ENCODE measurements at regions of chr1 and their contacts with region 1.

Region 1: GRCh38 chr1:208820580-208821212 is 576.5 kb upstream of the PLXNA2 start:
- DNase-seq: no peak
- ATAC-seq: no peak
- H3K4me3 ChIP-seq: no peak overlapping the region
- H3K4me3 Mint-ChIP-seq: no peak overlapping the region
- H3K27ac ChIP-seq: no peak overlapping the region
- H3K27ac Mint-ChIP-seq: no peak overlapping the region
- H3K4me1 ChIP-seq: no peaks in the 10 kb centered on the region
- H3K4me1 Mint-ChIP-seq: no peaks in the 10 kb centered on the region
- H3K27me3 ChIP-seq: no peaks in the 10 kb centered on the region
- H3K27me3 Mint-ChIP-seq: no peaks in the 10 kb centered on the region
- CTCF ChIP-seq: no peak

Region 2: DNA sequence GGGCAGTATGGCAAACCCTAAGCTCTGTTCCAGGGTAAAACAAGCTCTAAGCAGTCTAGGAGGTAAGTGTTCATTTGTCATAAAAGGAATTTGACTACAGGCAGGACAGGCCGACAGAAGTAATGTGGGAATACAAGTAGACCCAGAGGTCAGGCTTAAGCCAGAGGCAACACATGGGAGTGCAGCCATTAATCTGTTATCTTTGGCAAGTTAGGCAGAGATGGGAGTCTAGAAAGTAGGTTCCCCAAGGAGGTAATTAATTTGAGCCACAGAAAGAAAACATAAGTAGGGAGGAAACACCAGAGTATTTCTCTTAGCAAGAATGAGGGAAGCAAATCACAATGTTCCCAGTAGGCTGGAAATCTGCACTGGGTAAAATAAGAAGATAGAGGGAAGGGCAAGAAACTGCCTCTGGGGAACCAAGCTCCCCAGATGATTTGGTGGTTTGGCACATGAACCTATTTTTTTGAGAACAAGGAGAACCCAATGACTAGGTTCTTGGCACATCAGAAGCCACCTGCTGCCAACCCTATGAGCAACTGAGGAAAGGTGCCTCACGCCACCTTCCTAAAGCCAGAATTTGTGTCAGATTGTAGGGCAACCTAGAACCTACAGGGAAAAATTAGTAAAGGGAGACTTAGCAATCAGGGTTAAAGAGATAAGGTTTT is 59.9 kb after region 1 on chr1:
- CTCF ChIA-PET with region 1: no interaction called
- POLR2A ChIA-PET with region 1: no interaction called
- intact Hi-C with region 1: loop called in 1 of 2 experiments (anchors 10 kb)
- DNase-seq: no peak
- ATAC-seq: no peak
- H3K4me3 ChIP-seq: no peak overlapping the region
- H3K4me3 Mint-ChIP-seq: no peak overlapping the region
- H3K27ac ChIP-seq: no peak overlapping the region
- H3K27ac Mint-ChIP-seq: no peak overlapping the region
- H3K4me1 ChIP-seq: no peaks in the 10 kb centered on the region
- H3K4me1 Mint-ChIP-seq: no peaks in the 10 kb centered on the region
- H3K27me3 ChIP-seq: no peaks in the 10 kb centered on the region
- H3K27me3 Mint-ChIP-seq: no peaks in the 10 kb centered on the region
- CTCF ChIP-seq: no peak

Region 3: DNA sequence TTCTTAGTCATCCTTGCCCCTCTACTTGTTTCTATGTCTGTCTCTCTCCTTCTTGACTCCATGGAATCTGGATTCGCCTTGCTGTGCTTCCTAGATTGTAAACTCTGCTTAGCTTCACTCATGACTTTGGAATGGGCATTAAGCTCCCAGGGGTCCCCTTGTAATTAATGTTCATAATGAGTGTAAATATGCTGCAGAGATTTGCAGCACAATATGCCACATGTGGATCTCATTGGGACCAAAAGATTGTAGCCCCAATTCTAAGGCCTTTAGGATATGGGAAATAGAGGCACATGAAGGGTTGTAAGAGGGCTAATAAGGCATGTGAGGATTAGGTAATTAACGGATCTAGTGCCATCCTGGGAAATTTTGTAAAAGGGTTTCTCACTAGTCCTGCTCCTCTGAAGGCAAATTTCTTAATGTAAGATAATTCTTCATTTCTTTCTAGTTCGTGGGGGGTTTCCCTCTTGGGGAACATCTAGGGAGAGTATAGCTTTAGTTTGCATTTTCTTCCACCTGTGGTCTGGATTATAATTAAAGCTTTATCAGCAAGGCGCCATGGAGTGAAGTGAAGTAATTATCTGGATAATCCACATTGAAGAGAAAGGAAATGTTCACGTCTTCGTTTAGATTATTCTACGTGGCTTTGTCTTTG is 82.7 kb after region 1 on chr1:
- CTCF ChIA-PET with region 1: no interaction called
- POLR2A ChIA-PET with region 1: no interaction called
- intact Hi-C with region 1: no loop called
- DNase-seq: no peak
- ATAC-seq: no peak
- H3K4me3 ChIP-seq: no peak overlapping the region
- H3K4me3 Mint-ChIP-seq: no peak overlapping the region
- H3K27ac ChIP-seq: no peak overlapping the region
- H3K27ac Mint-ChIP-seq: no peak overlapping the region
- H3K4me1 ChIP-seq: no peaks in the 10 kb centered on the region
- H3K4me1 Mint-ChIP-seq: no peaks in the 10 kb centered on the region
- H3K27me3 ChIP-seq: no peaks in the 10 kb centered on the region
- H3K27me3 Mint-ChIP-seq: peaks cover 24% of the 10 kb centered on the region
- CTCF ChIP-seq: no peak

Measured in CD4-positive, alpha-beta T cell (primary cell).